Right ventricle myocardium inferior (tissue), 1 donor: ENCODE measurements at regions of chr16 and their contacts with region 1.

Region 1: GRCh38 chr16:68902008-68902968 is 59.0 kb downstream of the TANGO6 start:
- DNase-seq: no peak
- ATAC-seq: no peak

Region 2: DNA sequence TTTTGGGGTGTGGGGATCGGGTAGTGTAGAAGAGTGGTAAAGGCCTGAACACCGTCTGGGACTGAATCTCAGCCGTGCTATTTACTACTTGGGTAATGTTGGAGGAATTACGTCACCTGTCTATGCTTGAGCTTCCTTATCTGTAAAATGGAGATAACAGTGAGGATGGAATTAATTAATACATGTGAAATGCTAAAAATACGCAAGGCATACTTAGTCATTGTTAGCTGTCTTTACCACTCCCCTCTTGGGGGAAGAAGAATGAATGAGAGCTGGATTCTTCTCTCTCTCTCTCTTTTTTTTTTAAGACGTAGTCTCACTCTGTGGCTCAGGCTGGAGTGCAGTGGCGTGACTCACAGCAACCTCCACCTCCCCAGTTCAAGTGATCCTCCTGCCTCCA is 100.1 kb before region 1 on chr16:
- intact Hi-C with region 1: no loop called
- DNase-seq: no peak
- ATAC-seq: no peak

Region 3: GRCh38 chr16:69105489-69106361 is 203.4 kb after region 1 on chr16 and contains the start of gene HAS3:
- intact Hi-C with region 1: loop called (anchors 5 kb)
- DNase-seq: no peak
- ATAC-seq: peak; percentile 81
- total RNA-seq, gene HAS3: 0.30 TPM

Region 4: DNA sequence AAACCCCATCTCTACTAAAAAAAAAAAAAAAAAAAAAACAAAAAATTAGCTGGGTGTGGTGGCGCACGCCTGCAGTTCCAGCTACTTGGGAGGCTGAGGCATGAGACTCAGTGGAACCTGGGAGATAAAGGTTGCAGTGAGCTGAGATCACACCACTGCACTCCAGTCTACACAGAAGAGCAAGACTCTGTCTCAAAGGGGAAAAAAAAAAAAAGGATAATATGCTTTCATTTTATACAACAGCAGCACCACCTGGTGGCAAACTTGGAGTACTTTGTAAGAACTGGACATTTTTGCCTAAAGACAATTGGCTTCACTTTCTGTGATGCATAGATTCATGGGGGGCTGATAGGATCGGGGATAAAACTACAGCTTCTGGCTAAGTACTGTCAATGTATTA is 221.6 kb after region 1 on chr16:
- intact Hi-C with region 1: loop called (anchors 2 kb)
- DNase-seq: no peak
- ATAC-seq: no peak